ENCODE measurements at regions of chr16 and their contacts with region 1.

Region 1: GRCh38 chr16:31868691-31869167 is 4.9 kb upstream of the ZNF267 start:
- DNase-seq: peak; percentile 74
- H3K4me3 Mint-ChIP-seq: peak overlapping the region; percentile 72
- H3K27ac Mint-ChIP-seq: peak overlapping the region; percentile 93
- H3K4me1 Mint-ChIP-seq: peaks cover 77% of the 10 kb centered on the region
- H3K27me3 Mint-ChIP-seq: peaks cover 3% of the 10 kb centered on the region

Region 2: DNA sequence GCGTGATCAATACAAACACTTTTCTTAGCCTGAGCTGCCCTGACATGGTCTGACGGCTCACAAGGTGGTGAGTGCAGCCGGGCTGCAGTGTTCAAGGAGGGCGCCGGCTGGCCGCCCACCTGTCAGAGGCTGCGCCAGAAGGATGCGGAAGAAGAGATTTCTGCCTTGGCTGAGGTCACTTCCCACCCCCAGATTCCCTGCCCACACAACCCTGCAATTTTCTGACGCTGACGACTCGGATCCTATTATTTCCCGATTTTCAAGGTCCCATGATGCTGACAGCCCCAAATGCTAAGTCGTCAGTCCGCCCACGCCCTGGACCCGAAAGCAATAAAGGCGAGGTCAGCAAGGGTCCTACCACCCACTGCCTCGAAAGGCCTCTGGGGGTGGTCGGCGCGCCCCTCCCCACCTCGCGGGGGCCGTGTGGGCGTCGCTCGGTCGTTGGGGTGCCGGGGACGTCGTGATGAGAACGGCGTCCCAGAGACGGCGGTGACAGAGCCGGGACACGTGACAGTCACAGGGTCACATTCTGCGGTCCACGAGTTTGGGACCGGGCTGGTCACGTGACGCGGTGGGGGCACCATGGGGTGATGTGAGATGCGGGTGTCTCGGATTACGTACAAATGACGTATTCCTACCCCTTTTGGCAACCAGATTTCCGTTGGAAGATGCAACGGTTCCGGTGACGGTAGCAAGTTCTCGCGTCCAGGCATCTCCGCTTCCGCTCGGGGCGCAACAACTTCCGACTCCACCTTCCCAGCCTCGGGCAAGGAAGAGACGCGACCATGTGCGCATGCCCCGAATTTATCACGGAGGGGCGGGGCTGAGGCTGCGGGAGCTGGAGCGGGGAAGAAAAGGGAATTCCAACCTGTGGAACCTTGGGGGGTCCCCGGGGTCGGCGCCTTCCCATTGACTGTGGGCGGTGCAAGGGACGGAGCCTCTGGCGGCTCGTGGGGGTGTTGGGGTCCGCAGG is 835.7 kb before region 1 on chr16 and contains the start of gene STX4:
- intact Hi-C with region 1: loop called (anchors 1 kb)
- DNase-seq: peak; percentile 97
- H3K4me3 Mint-ChIP-seq: peak within 1 kb of the TSS; percentile 95
- H3K27ac Mint-ChIP-seq: peak within 1 kb of the TSS; percentile 92
- H3K4me1 Mint-ChIP-seq: peaks cover 24% of the 10 kb centered on the region
- H3K27me3 Mint-ChIP-seq: no peaks in the 10 kb centered on the region
- total RNA-seq, gene STX4: 56.4 and 58.7 TPM in 2 replicates

Region 3: DNA sequence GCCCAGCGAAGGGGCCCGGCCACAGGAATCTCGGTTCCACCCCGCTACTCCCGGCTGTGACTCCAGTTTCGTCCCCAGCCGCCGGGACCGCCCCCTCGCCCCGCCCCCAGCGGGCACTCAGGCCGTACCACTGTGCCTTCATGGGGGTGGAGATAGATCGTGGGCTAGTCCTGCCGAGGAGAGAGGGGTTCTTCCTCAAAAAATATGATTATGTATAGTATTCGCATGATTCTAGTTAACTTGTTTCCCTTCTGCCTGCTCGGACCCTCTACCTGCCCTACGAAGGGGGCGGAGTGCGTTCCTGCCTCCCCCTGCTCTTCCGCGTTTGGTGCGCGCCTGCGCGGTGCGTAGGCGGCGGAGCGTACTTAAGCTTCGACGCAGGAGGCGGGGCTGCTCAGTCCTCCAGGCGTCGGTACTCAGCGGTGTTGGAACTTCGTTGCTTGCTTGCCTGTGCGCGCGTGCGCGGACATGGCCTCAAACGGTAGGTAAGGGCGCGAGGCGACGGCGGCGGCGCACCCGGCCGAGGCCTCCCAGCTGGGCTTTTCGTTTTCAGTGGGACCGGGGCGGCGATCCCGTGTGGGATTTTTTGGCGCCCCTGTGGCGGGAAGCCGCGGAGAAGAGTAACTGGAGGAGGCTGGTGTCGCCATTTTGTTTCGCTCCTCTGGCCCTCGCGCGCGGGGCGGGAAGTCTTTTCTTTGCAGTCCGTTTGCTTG is 688.8 kb before region 1 on chr16 and contains the start of gene FUS:
- intact Hi-C with region 1: loop called (anchors 2 kb)
- DNase-seq: peak; percentile 88
- H3K4me3 Mint-ChIP-seq: peak within 1 kb of the TSS; percentile 98
- H3K27ac Mint-ChIP-seq: peak within 1 kb of the TSS; percentile 99
- H3K4me1 Mint-ChIP-seq: peaks cover 54% of the 10 kb centered on the region
- H3K27me3 Mint-ChIP-seq: no peaks in the 10 kb centered on the region
- total RNA-seq, gene FUS: 950 and 955 TPM in 2 replicates

Region 4: GRCh38 chr16:31354394-31355291 is 514.1 kb before region 1 on chr16 and contains the start of gene ITGAX:
- intact Hi-C with region 1: loop called (anchors 1 kb)
- DNase-seq: peak; percentile 76
- H3K4me3 Mint-ChIP-seq: peak within 1 kb of the TSS; percentile 84
- H3K27ac Mint-ChIP-seq: peak within 1 kb of the TSS; percentile 99
- H3K4me1 Mint-ChIP-seq: peaks cover 69% of the 10 kb centered on the region
- H3K27me3 Mint-ChIP-seq: no peaks in the 10 kb centered on the region
- total RNA-seq, gene ITGAX: 63.8 and 65.0 TPM in 2 replicates

Region 5: DNA sequence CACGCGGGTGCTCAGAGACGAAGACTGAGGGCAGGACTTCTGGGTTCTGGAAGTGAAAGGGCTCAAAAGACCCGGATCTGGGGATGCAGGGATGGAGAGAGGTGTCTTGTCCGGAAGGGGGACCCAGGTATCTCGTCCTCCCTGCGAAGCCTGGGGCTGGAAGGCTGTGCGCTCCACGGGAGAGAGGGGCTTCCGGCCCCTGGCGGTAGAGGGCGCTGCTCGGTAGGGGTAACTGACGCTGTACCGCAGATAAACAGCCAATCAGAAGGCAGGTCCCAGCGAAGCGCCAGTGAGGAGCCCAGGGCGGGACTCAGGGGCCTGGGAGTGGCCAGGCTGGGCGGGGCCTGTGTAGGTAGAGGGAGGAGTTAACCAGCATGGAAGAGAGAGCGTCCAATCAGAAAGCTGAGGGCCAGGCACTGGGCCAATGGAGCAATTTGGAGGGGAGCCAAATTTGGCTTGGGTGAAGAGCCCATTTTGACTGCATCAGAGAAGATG is 396.0 kb before region 1 on chr16:
- intact Hi-C with region 1: loop called (anchors 2 kb)
- DNase-seq: no peak
- H3K4me3 Mint-ChIP-seq: peak overlapping the region; percentile 70
- H3K27ac Mint-ChIP-seq: no peak overlapping the region
- H3K4me1 Mint-ChIP-seq: peaks cover 20% of the 10 kb centered on the region
- H3K27me3 Mint-ChIP-seq: peaks cover 46% of the 10 kb centered on the region

Region 6: GRCh38 chr16:31888735-31889134 is 20.0 kb after region 1 on chr16:
- intact Hi-C with region 1: loop called (anchors 2 kb)
- DNase-seq: no peak
- H3K4me3 Mint-ChIP-seq: peak overlapping the region; percentile 66
- H3K27ac Mint-ChIP-seq: peak overlapping the region; percentile 90
- H3K4me1 Mint-ChIP-seq: peaks cover 45% of the 10 kb centered on the region
- H3K27me3 Mint-ChIP-seq: no peaks in the 10 kb centered on the region